CD4-positive, alpha-beta memory T cell (primary cell): ENCODE measurements at regions of chr6 and their contacts with region 1.

Region 1: DNA sequence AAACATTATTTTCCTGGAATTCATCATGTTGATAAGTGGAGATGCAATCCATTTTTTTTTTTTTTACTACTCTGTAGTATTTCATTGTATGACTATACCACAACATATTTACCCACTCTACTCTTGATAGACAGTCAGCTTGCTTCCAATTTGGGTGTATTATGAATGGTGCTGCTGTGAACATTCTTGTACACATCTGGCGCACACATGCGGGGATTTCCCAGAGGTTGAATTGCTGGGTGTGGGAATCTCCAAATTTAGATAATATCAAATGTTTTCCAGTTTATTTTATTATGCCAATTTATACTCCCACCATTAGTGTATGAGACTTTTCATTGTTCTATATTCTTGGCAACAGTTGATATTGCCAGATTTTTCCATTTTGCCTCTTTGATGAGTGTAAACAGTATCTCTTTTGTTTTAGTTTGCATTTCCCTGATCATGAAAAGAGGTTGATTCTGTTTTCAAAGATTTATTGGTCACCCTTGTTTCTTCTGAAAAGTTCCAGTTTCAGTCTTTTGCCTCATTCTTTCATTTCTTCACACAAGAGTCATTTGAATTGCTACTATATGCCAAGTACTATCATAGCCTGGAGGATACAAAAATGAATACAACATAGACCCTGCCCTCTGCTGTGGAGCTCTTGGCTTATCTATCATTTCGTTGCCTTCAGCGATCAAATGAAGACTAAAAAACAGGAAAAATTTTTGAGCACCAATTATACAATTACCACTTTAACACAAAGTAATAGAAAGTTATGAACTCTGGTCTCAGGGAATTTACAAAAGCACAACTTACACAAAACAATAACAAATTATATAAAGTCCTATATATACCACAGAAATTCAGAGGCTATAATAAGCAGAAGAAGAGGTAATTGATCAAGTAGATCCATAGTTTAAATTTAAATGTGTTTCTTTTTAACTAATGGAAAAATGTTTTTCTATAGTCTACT is 17.1 kb upstream of the NCOA7 start:
- DNase-seq: no peak
- H3K4me3 ChIP-seq: no peak overlapping the region
- H3K4me3 Mint-ChIP-seq: no peak overlapping the region
- H3K27ac ChIP-seq: no peak overlapping the region
- H3K27ac Mint-ChIP-seq: no peak overlapping the region
- H3K4me1 ChIP-seq: no peaks in the 10 kb centered on the region
- H3K4me1 Mint-ChIP-seq: peaks cover 6 to 9% (median 7%) of the 10 kb centered on the region in 4 donors
- H3K27me3 ChIP-seq: no peaks in the 10 kb centered on the region
- H3K27me3 Mint-ChIP-seq: peaks cover 4 to 7% of the 10 kb centered on the region in 2 donors

Region 2: DNA sequence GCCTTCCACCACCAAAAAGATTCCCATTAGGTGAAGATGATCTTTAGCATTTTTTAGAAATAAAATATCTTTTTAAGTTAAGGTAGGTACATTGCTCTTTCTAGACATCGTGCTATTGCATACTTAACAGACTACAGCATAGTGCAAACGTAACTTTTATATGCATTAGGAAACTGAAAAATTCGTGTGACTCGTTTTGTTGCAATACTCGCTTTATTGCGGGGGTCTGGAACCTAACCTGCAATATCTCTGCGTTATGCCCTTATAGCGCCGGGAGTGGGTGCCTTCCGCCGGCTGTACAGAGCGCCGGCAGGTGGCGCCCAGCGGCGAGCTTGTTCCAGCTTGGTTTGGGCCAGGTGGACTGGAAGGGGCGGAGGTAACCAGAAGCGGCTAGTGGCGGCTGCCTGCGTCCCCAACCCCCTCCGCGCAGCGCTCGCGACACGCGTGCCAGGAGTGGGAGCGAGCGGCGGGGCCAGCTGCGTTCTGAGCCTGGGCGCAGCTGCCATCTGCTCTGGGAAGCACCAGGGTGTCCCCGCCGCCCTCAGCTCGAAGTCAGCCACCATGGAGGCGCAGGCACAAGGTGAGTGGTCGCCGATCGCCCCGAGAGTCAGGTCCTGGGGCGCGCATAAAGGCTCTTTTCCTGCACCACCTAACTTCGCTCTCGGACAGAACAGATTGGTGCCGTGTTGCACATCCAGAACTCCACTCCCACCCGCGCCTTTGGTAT is 620.1 kb before region 1 on chr6 and contains the start of gene TPD52L1:
- CTCF ChIA-PET with region 1: no interaction called
- POLR2A ChIA-PET with region 1: no interaction called
- intact Hi-C with region 1: loop called (anchors 2 kb)
- DNase-seq: peak; percentile 37 to 52 (median 44)
- H3K4me3 ChIP-seq: peak within 1 kb of the TSS; percentile 29 to 44
- H3K4me3 Mint-ChIP-seq: peak within 1 kb of the TSS; percentile 74 to 88 (median 83)
- H3K27ac ChIP-seq: no peak within 1 kb of the TSS
- H3K27ac Mint-ChIP-seq: peak within 1 kb of the TSS in 1 of 7 donors; percentile 61
- H3K4me1 ChIP-seq: peaks cover 11% of the 10 kb centered on the region
- H3K4me1 Mint-ChIP-seq: peaks cover 0 to 9% (median 7%) of the 10 kb centered on the region in 4 donors
- H3K27me3 ChIP-seq: peaks cover 3% of the 10 kb centered on the region
- H3K27me3 Mint-ChIP-seq: peaks cover 15 to 28% of the 10 kb centered on the region in 2 donors
- total RNA-seq, gene TPD52L1: 0.33 to 0.35 TPM

Region 3: GRCh38 chr6:125191916-125192609 is 581.6 kb before region 1 on chr6:
- CTCF ChIA-PET with region 1: interaction called, 3 read pairs
- POLR2A ChIA-PET with region 1: no interaction called
- intact Hi-C with region 1: loop called (anchors 1 kb)
- DNase-seq: peak; percentile 41 to 59 (median 45)
- H3K4me3 ChIP-seq: no peak overlapping the region
- H3K4me3 Mint-ChIP-seq: no peak overlapping the region
- H3K27ac ChIP-seq: no peak overlapping the region
- H3K27ac Mint-ChIP-seq: no peak overlapping the region
- H3K4me1 ChIP-seq: no peaks in the 10 kb centered on the region
- H3K4me1 Mint-ChIP-seq: peaks cover 0 to 3% (median 1%) of the 10 kb centered on the region in 4 donors
- H3K27me3 ChIP-seq: no peaks in the 10 kb centered on the region
- H3K27me3 Mint-ChIP-seq: peaks cover 3 to 4% of the 10 kb centered on the region in 2 donors

Region 4: GRCh38 chr6:125700581-125701353 is 72.9 kb before region 1 on chr6:
- CTCF ChIA-PET with region 1: no interaction called
- POLR2A ChIA-PET with region 1: no interaction called
- intact Hi-C with region 1: no loop called
- DNase-seq: no peak
- H3K4me3 ChIP-seq: no peak overlapping the region
- H3K4me3 Mint-ChIP-seq: no peak overlapping the region
- H3K27ac ChIP-seq: no peak overlapping the region
- H3K27ac Mint-ChIP-seq: no peak overlapping the region
- H3K4me1 ChIP-seq: no peaks in the 10 kb centered on the region
- H3K4me1 Mint-ChIP-seq: no peaks in the 10 kb centered on the region
- H3K27me3 ChIP-seq: no peaks in the 10 kb centered on the region
- H3K27me3 Mint-ChIP-seq: peaks cover 5 to 7% of the 10 kb centered on the region in 2 donors

Region 5: DNA sequence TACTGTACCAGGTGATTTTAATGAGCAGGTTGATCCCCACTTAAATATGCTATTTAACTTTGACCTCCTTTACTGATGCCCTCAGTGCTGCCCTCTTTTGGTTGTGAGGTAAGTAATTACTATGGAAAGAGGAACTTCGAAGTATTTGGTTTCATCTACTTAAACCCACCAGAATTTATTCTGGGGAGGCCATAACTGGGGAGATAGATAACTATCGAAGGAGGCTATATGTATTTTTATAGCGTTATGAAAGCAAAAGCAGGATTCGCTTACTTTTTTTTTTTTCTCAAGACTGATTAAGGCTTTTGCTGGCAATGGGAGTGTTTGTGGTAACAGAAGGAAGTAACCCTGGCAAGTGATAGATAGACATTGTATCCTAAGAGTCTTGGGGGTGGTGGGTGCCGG is 397.3 kb after region 1 on chr6:
- CTCF ChIA-PET with region 1: no interaction called
- POLR2A ChIA-PET with region 1: no interaction called
- intact Hi-C with region 1: no loop called
- DNase-seq: peak in 4 of 5 donors; percentile 2 to 19 (median 7)
- H3K4me3 ChIP-seq: no peak overlapping the region
- H3K4me3 Mint-ChIP-seq: peak overlapping the region in 6 of 8 donors; percentile 0 to 69 (median 6)
- H3K27ac ChIP-seq: no peak overlapping the region
- H3K27ac Mint-ChIP-seq: peak overlapping the region in 1 of 7 donors; percentile 1
- H3K4me1 ChIP-seq: no peaks in the 10 kb centered on the region
- H3K4me1 Mint-ChIP-seq: peaks cover 0 to 6% (median 5%) of the 10 kb centered on the region in 4 donors
- H3K27me3 ChIP-seq: no peaks in the 10 kb centered on the region
- H3K27me3 Mint-ChIP-seq: no peaks in the 10 kb centered on the region